H1 (cell line): ENCODE measurements at regions of chr2 and their contacts with region 1.

Region 1: GRCh38 chr2:70190418-70191243 is at the start of gene C2orf42:
- DNase-seq: peak; percentile 92
- H3K4me3 ChIP-seq: peak within 1 kb of the TSS; percentile 71 to 97 (median 74)
- H3K27ac ChIP-seq: peak within 1 kb of the TSS; percentile 77
- H3K4me1 ChIP-seq: no peaks in the 10 kb centered on the region
- H3K27me3 ChIP-seq: no peaks in the 10 kb centered on the region
- CTCF ChIP-seq: peak in 2 of 3 experiments; percentile 7 to 19; a peak in 2 of 4 replicates
- EP300 ChIP-seq: no peak
- POLR2A ChIP-seq: peak; percentile 90 to 96
- RAD21 ChIP-seq: peak; percentile 4 to 13; a peak in 2 of 4 replicates
- total RNA-seq, gene C2orf42: 9.4 and 10.7 TPM in 2 replicates

Region 2: DNA sequence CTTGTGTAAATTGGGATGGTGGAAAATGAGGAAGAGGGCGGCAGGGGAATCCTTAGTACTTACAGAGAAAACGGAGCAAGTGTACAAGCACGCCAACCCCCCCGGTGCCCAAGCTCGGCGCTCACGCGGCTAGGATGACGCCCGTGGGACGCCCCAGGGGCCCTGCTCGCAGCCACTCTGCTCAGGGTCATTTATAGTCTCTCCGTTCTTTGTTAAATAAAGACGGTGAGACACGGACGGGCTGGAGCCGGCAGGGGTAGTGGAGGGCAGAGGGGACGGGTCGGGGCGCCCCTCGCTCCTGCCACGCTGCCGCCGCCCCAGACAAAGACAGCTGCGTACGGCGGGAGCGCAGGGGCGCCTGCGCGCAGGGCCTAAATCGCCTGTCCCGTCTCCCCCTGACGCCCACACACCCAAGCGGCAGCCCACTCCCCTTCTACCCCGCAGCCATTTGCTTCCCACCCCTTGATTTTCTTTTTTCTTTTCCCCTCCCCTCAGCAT is 65.6 kb before region 1 on chr2:
- CTCF ChIA-PET with region 1: interaction called, 5 read pairs
- POLR2A ChIA-PET with region 1: interaction called, 12 read pairs
- DNase-seq: peak in 1 of 2 experiments; percentile 75
- H3K4me3 ChIP-seq: peak overlapping the region; percentile 52 to 89 (median 74)
- H3K27ac ChIP-seq: peak overlapping the region; percentile 97
- H3K4me1 ChIP-seq: peaks cover 7 to 18% (median 10%) of the 10 kb centered on the region in 4 experiments
- H3K27me3 ChIP-seq: no peaks in the 10 kb centered on the region; a peak in 1 of 7 replicates
- CTCF ChIP-seq: no peak
- EP300 ChIP-seq: no peak
- POLR2A ChIP-seq: peak; percentile 50 to 97
- RAD21 ChIP-seq: no peak

Region 3: DNA sequence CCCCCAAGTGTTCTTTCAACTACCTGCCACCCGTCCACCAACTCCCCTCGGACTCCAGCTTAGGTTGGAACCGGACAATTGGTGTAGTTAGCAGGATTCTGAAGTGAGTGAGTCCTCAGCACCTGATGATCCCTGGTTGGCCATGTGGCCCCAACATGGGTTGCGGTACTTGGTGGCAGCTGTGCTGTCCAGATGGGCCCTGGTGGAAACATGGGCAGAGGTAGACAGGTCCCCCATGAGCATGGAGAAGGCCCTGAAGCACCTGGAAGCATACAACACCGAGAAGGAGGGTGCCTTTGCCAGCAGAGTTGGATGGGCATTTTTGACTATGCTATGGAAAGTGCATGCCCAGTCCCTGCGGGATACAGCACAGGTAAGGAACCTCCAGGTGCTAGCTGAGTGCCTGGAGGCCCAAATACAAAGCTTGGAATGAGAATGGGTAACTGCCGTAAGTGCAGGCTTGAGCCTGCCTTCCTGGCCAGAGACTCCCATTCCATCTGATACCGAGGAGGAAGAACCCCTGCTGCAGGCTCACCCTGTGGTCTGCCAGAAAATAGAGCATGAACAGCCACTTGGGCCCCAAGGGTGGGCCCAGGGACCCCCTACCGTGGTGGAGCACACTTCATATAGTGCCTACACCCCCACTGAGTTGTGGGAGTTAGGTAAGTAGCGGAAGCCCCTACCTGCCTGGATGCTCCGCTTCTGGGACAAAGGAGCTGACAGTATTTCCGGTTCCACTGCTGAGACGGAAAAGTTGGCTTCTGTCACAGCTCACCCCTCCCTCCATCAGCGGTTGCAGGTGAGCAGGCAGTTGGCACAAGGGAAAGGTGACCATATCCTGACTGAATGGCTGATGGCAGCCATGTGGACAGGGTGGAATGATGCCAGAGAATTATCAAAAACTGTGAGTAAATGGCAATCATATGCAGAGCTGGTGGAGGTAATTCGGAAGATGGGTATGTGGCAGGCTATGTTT is 11.5 kb after region 1 on chr2:
- CTCF ChIA-PET with region 1: interaction called, 4 read pairs
- POLR2A ChIA-PET with region 1: interaction called, 11 read pairs
- DNase-seq: no peak
- H3K4me3 ChIP-seq: no peak overlapping the region
- H3K27ac ChIP-seq: no peak overlapping the region
- H3K4me1 ChIP-seq: no peaks in the 10 kb centered on the region; a peak in 1 of 7 replicates
- H3K27me3 ChIP-seq: no peaks in the 10 kb centered on the region
- CTCF ChIP-seq: no peak
- EP300 ChIP-seq: no peak
- POLR2A ChIP-seq: no peak
- RAD21 ChIP-seq: no peak

Region 4: DNA sequence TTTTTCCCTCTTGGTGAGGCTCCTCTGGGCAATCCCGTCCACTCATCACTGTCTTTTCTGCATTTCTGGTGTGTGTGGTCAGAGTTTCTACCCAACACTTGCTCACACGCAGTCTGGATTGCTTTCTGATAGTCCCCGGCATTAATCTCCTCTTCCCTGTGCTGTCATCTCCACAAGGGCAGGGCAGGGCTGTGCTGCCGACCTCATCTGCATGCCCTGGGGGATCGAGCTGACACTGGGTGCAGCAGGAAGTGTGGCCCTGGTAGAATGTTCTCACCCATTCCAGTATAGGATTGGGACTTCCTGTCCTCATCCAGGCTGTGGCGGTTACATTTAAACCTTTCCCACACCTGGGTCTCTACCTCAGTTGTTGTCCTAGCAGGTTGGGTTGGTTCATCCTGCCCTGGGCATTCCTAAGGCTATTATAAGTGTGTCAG is 191.2 kb after region 1 on chr2:
- CTCF ChIA-PET with region 1: no interaction called
- POLR2A ChIA-PET with region 1: no interaction called
- DNase-seq: no peak
- H3K4me3 ChIP-seq: no peak overlapping the region
- H3K27ac ChIP-seq: no peak overlapping the region
- H3K4me1 ChIP-seq: no peaks in the 10 kb centered on the region
- H3K27me3 ChIP-seq: no peaks in the 10 kb centered on the region; a peak in 3 of 7 replicates
- CTCF ChIP-seq: no peak
- EP300 ChIP-seq: no peak
- POLR2A ChIP-seq: no peak
- RAD21 ChIP-seq: no peak